ENCODE measurements at regions of chr22 and their contacts with region 1.

Region 1: GRCh38 chr22:25465949-25466348 is 98.5 kb upstream of the GRK3 start:
- DNase-seq: no peak
- H3K4me3 ChIP-seq: no peak overlapping the region
- H3K27ac ChIP-seq: no peak overlapping the region
- H3K27me3 ChIP-seq: no peaks in the 10 kb centered on the region
- CTCF ChIP-seq: no peak

Region 2: DNA sequence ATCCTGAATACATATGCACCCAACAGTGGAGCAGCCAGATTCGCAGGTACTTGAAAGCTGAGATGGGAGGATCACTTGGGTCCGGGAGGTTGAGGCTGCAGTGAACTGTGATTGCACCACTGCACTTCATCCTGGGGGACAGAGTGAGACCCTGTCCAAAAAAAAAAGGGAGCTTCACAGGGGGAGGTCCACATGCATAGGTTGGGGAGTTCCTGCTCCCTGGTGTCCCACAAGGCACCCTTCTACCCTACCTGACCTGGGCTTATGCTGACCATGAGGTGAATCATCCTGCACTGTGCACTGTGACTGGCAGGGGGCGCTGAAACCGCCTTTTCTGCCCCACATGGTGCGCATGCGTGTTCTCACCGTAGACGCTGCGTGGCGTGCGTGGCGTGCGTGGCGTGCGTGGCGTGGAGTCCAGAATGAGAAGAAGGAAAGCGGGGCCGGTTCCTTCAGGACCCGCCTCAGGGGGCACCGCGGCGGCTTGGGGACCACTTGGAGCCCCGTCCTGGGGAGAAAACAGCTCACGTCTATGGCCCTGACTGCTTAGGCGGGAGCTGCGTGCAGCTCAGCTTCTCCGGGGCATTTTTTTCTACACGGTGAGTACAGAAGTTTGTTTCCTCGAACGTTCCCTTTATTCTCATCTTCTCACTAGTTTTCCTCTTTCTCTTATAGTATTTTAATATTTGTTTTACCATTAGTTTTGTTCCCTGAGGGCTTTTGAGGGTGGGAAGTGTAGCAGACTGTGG is 18.1 kb before region 1 on chr22:
- CTCF ChIA-PET with region 1: interaction called, 27 read pairs
- POLR2A ChIA-PET with region 1: no interaction called
- DNase-seq: peak; percentile 33
- H3K4me3 ChIP-seq: peak overlapping the region; percentile 82
- H3K27ac ChIP-seq: peak overlapping the region; percentile 68
- H3K27me3 ChIP-seq: no peaks in the 10 kb centered on the region
- CTCF ChIP-seq: peak; percentile 95

Region 3: GRCh38 chr22:25569983-25570382 is 104.0 kb after region 1 on chr22:
- CTCF ChIA-PET with region 1: no interaction called
- POLR2A ChIA-PET with region 1: no interaction called
- DNase-seq: no peak
- H3K4me3 ChIP-seq: no peak overlapping the region
- H3K27ac ChIP-seq: no peak overlapping the region
- H3K27me3 ChIP-seq: peaks cover 11% of the 10 kb centered on the region
- CTCF ChIP-seq: no peak

Region 4: DNA sequence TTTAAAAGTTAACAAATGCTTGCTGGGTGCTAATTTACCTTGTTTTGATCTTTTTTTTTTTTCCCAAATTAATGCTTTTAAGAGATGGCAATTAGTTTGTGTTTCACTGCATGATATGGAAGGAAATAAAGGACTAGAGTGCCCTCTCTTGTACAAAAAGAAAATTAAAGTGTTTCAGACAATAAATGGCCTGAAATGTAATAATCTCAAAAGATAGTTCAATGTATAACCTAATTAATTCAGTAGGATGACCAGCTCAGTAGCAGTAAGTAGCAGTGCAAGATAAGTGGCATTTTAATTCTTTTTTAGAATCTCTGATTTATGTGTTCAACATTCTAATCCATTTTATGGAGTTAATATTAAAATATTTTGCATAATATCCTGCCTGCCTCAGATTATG is 236.1 kb after region 1 on chr22:
- CTCF ChIA-PET with region 1: interaction called, 21 read pairs
- POLR2A ChIA-PET with region 1: no interaction called
- DNase-seq: no peak
- H3K4me3 ChIP-seq: no peak overlapping the region
- H3K27ac ChIP-seq: no peak overlapping the region
- H3K27me3 ChIP-seq: no peaks in the 10 kb centered on the region
- CTCF ChIP-seq: peak; percentile 37

Region 5: GRCh38 chr22:25772288-25772687 is 306.3 kb after region 1 on chr22:
- CTCF ChIA-PET with region 1: interaction called, 62 read pairs
- POLR2A ChIA-PET with region 1: no interaction called
- DNase-seq: no peak
- H3K4me3 ChIP-seq: no peak overlapping the region
- H3K27ac ChIP-seq: no peak overlapping the region
- H3K27me3 ChIP-seq: no peaks in the 10 kb centered on the region
- CTCF ChIP-seq: no peak

Region 6: DNA sequence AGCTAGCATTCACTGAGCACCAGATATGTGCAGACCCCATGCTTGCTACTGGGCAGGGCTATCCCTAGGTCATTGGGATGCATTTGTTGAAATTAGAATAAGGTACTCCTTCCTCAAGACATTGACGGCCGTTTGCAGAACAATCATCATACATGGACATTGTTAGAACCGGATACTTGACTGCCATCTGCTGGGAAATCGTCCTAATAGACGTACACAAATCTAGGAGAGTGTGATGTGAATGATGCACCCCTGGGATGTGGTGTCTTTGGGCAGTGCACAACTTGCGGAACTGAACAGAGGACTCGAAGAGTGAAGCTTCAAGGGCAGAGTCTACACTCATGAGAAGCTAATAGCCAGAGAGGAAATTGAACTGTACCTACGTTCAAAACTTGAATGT is 311.9 kb after region 1 on chr22:
- CTCF ChIA-PET with region 1: interaction called, 62 read pairs
- POLR2A ChIA-PET with region 1: no interaction called
- DNase-seq: no peak
- H3K4me3 ChIP-seq: no peak overlapping the region
- H3K27ac ChIP-seq: no peak overlapping the region
- H3K27me3 ChIP-seq: no peaks in the 10 kb centered on the region
- CTCF ChIP-seq: peak; percentile 47; the same call in 1 of the 2 replicates

Region 7: GRCh38 chr22:26330966-26331625 is 865.1 kb after region 1 on chr22:
- CTCF ChIA-PET with region 1: interaction called, 11 read pairs
- POLR2A ChIA-PET with region 1: no interaction called
- DNase-seq: no peak
- H3K4me3 ChIP-seq: no peak overlapping the region
- H3K27ac ChIP-seq: no peak overlapping the region
- H3K27me3 ChIP-seq: peaks cover 4% of the 10 kb centered on the region
- CTCF ChIP-seq: peak; percentile 85

Measured in AG04450 (cell line).